HCT116 (cell line): ENCODE measurements at regions of chr12 and their contacts with region 1.

Region 1: DNA sequence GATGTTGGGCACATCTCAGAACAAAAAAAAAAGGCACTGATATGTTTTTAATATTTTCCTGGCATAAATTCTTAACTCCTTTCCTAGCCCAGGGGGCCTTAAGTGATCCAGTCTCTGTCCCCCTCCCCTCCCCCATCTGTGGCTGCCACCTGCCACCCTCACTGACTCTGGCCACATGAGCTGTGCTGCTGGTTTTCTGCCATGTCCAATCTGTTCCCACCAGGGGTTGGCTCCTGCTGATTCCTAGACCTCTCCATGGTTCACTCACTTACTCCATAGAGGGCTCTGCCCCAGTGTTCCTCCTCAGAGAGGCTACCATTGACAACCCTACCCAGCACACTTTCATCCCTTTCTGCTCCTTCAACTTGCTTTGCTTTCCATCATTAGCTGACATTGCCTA is 163.3 kb downstream of the SSPN start:
- DNase-seq: no peak
- ATAC-seq: no peak
- H3K4me3 ChIP-seq: no peak overlapping the region
- H3K27ac ChIP-seq: no peak overlapping the region
- H3K4me1 ChIP-seq: no peaks in the 10 kb centered on the region
- H3K27me3 ChIP-seq: no peaks in the 10 kb centered on the region
- CTCF ChIP-seq: no peak
- POLR2A ChIP-seq: no peak
- RAD21 ChIP-seq: no peak

Region 2: DNA sequence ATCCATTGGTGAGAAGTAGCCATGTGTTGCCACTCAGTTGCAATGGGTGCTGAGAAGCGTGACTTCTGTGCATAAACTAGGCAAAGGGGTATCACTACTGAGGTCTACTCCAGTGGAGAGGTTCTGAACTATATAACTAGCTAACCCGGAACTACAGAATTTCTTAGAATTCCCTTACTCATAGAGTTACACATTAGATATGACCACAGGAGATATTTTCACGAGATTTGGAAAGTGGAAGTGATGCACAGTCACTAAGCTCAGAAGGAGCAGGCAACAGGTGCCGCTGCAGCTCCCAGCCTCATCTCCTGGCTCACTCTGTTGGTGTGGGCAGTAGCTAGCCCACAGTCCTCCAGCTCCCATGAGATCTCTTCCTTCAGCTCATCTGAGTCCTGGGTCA is 26.7 kb before region 1 on chr12:
- CTCF ChIA-PET with region 1: no interaction called
- POLR2A ChIA-PET with region 1: no interaction called
- RAD21 ChIA-PET with region 1: no interaction called
- intact Hi-C with region 1: loop called (anchors 1 kb)
- DNase-seq: no peak
- ATAC-seq: no peak
- H3K4me3 ChIP-seq: no peak overlapping the region
- H3K27ac ChIP-seq: no peak overlapping the region
- H3K4me1 ChIP-seq: no peaks in the 10 kb centered on the region
- H3K27me3 ChIP-seq: no peaks in the 10 kb centered on the region
- CTCF ChIP-seq: no peak
- POLR2A ChIP-seq: no peak
- RAD21 ChIP-seq: no peak